ENCODE measurements at regions of chr5 and their contacts with region 1.

Region 1: GRCh38 chr5:37308796-37309195 is 59.6 kb upstream of the CPLANE1 start:
- DNase-seq: no peak
- H3K4me3 ChIP-seq: no peak overlapping the region
- H3K27ac ChIP-seq: no peak overlapping the region
- H3K4me1 ChIP-seq: no peaks in the 10 kb centered on the region
- H3K27me3 ChIP-seq: no peaks in the 10 kb centered on the region
- CTCF ChIP-seq: no peak

Region 2: DNA sequence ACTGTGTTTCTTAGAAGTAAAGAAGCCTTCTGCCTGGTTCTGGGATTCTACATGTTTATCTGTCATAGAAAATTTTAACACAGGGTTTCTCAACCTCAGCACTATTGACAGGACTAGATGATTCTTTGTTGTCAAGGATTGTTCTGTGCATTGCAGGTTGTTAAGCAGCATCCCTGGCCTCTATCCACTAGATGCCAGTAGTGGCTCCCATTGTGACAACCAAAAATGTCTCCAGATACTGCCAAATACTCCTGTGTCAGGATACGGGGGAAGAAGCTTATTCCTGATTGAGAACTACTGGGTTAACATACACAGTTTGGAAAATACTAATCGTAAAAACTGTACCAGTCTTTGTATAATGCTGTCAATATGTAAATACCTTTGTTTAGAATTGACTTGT is 265.1 kb before region 1 on chr5:
- CTCF ChIA-PET with region 1: no interaction called
- POLR2A ChIA-PET with region 1: interaction called, 36 read pairs
- intact Hi-C with region 1: no loop called
- DNase-seq: no peak
- H3K4me3 ChIP-seq: no peak overlapping the region
- H3K27ac ChIP-seq: no peak overlapping the region
- H3K4me1 ChIP-seq: no peaks in the 10 kb centered on the region
- H3K27me3 ChIP-seq: no peaks in the 10 kb centered on the region
- CTCF ChIP-seq: no peak

Region 3: DNA sequence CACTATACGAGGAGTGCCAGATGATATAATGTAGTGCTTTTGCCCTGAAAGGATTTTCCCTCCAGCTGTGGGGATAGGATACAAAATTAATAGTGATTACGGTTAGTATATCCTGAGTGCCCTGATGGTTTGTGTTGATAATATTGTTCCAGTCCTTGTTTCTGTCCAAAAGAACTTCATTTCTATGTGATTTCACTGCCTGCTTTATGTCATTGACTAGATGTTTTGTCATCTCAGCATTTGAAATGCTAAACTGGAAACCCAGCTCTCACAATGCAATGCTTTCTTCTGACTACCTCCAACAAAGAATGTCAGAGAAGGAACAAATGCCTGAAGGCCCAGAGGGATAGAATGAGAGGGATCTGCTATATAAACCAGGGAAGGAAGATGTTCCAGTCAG is 254.4 kb before region 1 on chr5:
- CTCF ChIA-PET with region 1: no interaction called
- POLR2A ChIA-PET with region 1: no interaction called
- intact Hi-C with region 1: loop called (anchors 10 kb)
- DNase-seq: no peak
- H3K4me3 ChIP-seq: no peak overlapping the region
- H3K27ac ChIP-seq: no peak overlapping the region
- H3K4me1 ChIP-seq: no peaks in the 10 kb centered on the region
- H3K27me3 ChIP-seq: no peaks in the 10 kb centered on the region
- CTCF ChIP-seq: no peak

Region 4: DNA sequence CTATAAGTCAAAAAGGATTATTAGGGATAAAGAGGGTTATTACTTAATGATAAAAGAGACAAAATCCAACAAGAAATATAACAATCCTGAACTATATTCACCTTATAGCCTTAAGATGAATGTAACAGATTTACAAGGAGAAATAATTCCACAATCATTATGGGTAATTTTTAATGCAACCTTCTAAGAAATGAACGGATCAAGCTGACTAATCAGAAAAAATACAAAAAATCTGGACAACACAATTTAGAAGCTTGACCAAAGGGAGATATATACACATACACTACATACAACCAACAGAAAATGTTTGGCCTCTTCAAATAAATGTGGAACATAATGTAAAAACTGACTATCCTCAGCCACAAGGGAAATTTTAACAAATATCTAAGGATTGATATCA is 161.9 kb before region 1 on chr5:
- CTCF ChIA-PET with region 1: interaction called, 10 read pairs
- POLR2A ChIA-PET with region 1: no interaction called
- intact Hi-C with region 1: no loop called
- DNase-seq: no peak
- H3K4me3 ChIP-seq: no peak overlapping the region
- H3K27ac ChIP-seq: no peak overlapping the region
- H3K4me1 ChIP-seq: no peaks in the 10 kb centered on the region
- H3K27me3 ChIP-seq: no peaks in the 10 kb centered on the region
- CTCF ChIP-seq: no peak

Region 5: DNA sequence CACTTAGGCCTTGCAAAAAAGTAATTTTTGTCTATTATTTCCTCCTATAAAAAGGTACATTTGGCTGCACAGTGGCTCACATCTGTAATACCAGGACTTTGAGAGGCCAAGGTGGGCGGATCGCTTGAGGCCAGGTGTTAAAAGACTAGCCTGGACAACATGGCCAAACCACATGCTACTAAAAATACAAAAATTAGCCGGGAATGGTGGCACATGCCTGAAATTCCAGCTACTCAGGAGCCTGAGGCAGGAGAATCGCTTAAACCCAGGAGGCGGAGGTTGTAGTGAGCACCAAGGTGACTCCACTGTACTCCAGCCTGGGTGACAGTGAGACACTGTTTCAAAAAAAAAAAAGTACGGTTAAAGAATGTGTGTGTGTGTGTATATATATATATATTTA is 46.4 kb after region 1 on chr5:
- CTCF ChIA-PET with region 1: interaction called, 11 read pairs
- POLR2A ChIA-PET with region 1: no interaction called
- intact Hi-C with region 1: no loop called
- DNase-seq: no peak
- H3K4me3 ChIP-seq: no peak overlapping the region
- H3K27ac ChIP-seq: no peak overlapping the region
- H3K4me1 ChIP-seq: no peaks in the 10 kb centered on the region
- H3K27me3 ChIP-seq: no peaks in the 10 kb centered on the region
- CTCF ChIP-seq: no peak

Region 6: GRCh38 chr5:37926732-37927131 is 617.9 kb after region 1 on chr5:
- CTCF ChIA-PET with region 1: no interaction called
- POLR2A ChIA-PET with region 1: no interaction called
- intact Hi-C with region 1: no loop called
- DNase-seq: no peak
- H3K4me3 ChIP-seq: no peak overlapping the region
- H3K27ac ChIP-seq: no peak overlapping the region
- H3K4me1 ChIP-seq: no peaks in the 10 kb centered on the region
- H3K27me3 ChIP-seq: peaks cover 37% of the 10 kb centered on the region
- CTCF ChIP-seq: no peak

Region 7: DNA sequence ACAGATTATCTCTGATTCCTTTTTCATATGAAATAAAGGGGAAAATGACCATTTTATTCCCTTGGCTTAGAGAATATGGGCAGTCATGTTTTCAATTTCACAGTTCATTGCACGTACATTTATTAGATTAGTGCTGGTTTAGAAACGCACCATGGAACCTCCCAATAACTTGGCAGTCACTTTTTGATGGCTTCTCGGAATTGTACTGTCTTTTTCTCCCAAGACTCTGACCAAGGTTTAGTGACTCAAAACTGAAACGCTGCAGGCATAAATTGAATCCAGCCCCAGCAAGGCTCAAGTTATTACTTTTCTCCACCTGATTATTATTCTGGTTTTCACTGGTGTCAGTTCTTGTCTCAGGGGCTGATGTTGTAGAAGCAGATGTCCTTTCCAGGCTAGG is 893.9 kb after region 1 on chr5:
- CTCF ChIA-PET with region 1: interaction called, 12 read pairs
- POLR2A ChIA-PET with region 1: no interaction called
- intact Hi-C with region 1: no loop called
- DNase-seq: no peak
- H3K4me3 ChIP-seq: no peak overlapping the region
- H3K27ac ChIP-seq: no peak overlapping the region
- H3K4me1 ChIP-seq: no peaks in the 10 kb centered on the region
- H3K27me3 ChIP-seq: 0 out of 2 replicates have a peak, but pooled peaks cover 11% of the 10 kb centered on the region
- CTCF ChIP-seq: no peak